Natural killer cell (primary cell): ENCODE measurements at regions of chr7 and their contacts with region 1.

Region 1: DNA sequence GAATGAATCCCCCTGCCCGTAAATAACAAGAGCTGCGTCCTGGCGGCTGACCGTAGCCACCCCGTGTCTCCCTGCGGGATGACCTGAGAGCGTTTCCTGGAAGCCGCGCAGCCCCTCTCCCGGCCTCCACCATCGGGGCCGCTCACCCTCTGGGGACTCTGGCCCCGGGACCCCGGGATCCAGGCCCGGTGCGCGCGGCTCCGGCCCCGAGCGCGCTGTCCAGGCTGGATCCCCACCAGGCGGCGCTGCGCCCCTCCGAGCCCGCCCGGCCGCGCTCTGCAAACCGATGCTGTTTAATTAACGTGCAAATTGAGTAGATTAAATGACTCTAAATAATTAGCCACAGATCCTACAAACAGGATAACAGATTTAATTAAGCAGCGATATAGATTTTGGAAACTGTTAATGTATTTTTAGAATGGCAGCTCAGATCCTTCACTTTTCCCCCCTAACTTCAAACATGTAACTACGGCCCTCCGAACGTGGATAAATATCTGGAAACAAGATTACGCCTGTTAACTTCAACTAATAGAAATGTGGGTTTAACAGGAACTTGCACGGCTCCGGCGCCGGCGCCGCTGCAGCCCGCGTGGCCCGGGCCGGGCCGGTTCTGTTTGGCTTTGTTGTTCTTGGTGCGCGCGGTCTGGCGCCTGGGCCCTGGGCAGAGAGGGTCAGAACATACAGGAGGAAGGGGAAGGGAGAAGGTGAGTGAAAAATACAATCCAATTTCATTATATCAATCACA is 7.1 kb upstream of the UNCX start:
- DNase-seq: peak; percentile 53 to 69
- ATAC-seq: peak; percentile 52 to 72 (median 62)
- H3K4me3 ChIP-seq: no peak overlapping the region
- H3K4me3 Mint-ChIP-seq: peak overlapping the region; percentile 17
- H3K27ac ChIP-seq: no peak overlapping the region
- H3K27ac Mint-ChIP-seq: peak overlapping the region; percentile 27 to 69
- H3K4me1 ChIP-seq: no peaks in the 10 kb centered on the region
- H3K4me1 Mint-ChIP-seq: peaks cover 0 to 8% of the 10 kb centered on the region in 2 donors
- H3K27me3 ChIP-seq: peaks cover 38% of the 10 kb centered on the region
- H3K27me3 Mint-ChIP-seq: peaks cover 38 to 60% of the 10 kb centered on the region in 2 donors
- CTCF ChIP-seq: peak; percentile 81

Region 2: DNA sequence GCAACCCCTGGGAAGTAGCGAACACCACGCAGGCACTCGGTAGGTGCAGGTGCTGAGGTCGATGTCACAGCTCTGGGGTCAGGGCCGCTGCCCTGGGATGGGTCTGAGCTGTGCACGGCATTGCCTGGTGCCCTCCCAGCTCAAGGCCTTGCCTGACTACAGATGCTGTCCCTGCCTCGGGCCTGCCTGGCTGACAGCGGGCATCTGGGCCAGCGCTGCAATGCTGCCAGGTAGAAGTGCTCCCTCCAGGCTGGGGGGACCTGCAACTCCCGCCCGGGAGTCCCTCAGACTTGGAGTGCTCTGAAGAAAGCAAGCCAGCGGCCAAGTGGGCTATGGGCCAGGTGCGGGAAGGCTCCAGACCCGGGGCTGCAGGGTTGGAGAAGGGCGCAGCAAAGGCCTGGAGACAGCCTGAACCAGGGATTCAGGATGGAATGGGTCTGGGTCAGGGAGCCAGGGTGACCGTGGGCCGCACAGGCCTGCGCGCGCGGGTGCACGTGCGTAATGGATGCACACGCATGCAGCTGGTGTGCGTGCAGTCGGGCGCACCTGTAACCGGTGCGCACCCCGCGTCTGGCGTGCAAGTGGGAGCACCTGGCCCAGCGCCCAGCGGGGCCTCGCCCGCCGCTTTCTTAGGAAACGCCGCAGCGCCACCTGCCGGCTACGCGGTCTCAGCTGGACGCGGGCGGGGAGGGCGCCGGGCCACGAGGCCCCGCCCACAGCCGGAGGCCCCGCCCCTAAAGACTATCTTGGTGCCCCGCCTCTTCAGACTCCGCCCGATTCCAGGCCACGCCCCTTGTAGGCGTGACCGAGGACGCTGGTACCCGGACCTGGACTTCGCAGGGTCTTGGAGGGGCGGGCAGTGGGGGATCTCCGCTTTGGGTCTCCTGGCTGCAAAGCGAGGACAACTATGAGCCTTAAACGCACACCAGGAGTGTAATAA is 187.0 kb after region 1 on chr7:
- intact Hi-C with region 1: loop called (anchors 2 kb)
- DNase-seq: peak; percentile 89 to 95
- ATAC-seq: peak; percentile 93
- H3K4me3 ChIP-seq: no peak overlapping the region
- H3K4me3 Mint-ChIP-seq: peak overlapping the region; percentile 4
- H3K27ac ChIP-seq: no peak overlapping the region
- H3K27ac Mint-ChIP-seq: peak overlapping the region in 1 of 2 donors; percentile 59
- H3K4me1 ChIP-seq: peaks cover 24% of the 10 kb centered on the region
- H3K4me1 Mint-ChIP-seq: peaks cover 8 to 12% of the 10 kb centered on the region in 2 donors
- H3K27me3 ChIP-seq: no peaks in the 10 kb centered on the region
- H3K27me3 Mint-ChIP-seq: peaks cover 0 to 3% of the 10 kb centered on the region in 2 donors
- CTCF ChIP-seq: peak; percentile 74

Region 3: GRCh38 chr7:1432411-1433082 is 206.9 kb after region 1 on chr7:
- intact Hi-C with region 1: loop called (anchors 1 kb)
- DNase-seq: peak; percentile 77 to 87
- ATAC-seq: peak; percentile 68 to 98 (median 93)
- H3K4me3 ChIP-seq: no peak overlapping the region
- H3K4me3 Mint-ChIP-seq: no peak overlapping the region
- H3K27ac ChIP-seq: no peak overlapping the region
- H3K27ac Mint-ChIP-seq: peak overlapping the region in 1 of 2 donors; percentile 52
- H3K4me1 ChIP-seq: peaks cover 7% of the 10 kb centered on the region
- H3K4me1 Mint-ChIP-seq: peaks cover 0 to 10% of the 10 kb centered on the region in 2 donors
- H3K27me3 ChIP-seq: no peaks in the 10 kb centered on the region
- H3K27me3 Mint-ChIP-seq: peaks cover 0 to 4% of the 10 kb centered on the region in 2 donors
- CTCF ChIP-seq: peak; percentile 97